Endothelial cell of umbilical vein (primary cell): ENCODE measurements at regions of chr15 and their contacts with region 1.

Region 1: DNA sequence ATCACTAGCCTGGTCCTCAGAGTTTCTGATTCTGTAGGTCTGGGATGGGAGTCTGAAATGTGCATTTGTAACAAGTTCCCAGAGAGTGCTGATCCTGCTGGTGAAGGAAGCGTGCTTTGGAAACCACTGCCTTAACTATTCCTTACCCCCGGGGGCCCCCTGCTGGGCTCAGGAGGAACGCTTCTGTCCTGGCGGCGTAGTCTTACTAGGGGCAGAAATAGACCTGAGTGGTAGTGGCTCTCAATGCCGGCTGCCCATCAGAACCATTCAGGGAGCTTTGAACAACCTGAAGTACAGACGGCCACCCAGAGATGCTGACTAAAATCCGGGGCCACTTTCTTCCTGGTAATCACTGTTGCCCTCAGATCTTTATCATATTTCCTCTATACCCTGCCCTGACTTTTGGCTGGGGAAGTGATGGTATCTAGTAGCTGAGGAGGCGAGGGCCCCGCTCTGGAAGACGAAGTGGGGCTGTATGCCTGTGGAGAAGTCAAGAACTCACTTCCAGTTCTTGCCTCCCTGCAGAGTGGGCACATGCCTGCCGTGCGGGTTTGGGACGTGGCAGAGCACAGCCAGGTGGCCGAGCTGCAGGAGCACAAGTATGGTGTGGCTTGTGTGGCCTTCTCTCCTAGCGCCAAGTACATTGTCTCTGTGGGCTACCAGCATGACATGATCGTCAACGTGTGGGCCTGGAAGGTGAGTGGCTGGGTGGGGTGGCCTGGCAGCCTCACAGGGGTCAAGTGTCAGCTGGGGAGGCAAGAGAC is 16.3 kb upstream of the JMJD7 start:
- DNase-seq: peak; percentile 84
- H3K4me3 ChIP-seq: no peak overlapping the region
- H3K27ac ChIP-seq: no peak overlapping the region
- H3K4me1 ChIP-seq: peaks cover 8% of the 10 kb centered on the region
- H3K27me3 ChIP-seq: no peaks in the 10 kb centered on the region
- CTCF ChIP-seq: peak; percentile 93 to 94
- POLR2A ChIP-seq: no peak

Region 2: GRCh38 chr15:41695750-41696426 is 115.7 kb before region 1 on chr15:
- CTCF ChIA-PET with region 1: interaction called, 5 read pairs
- POLR2A ChIA-PET with region 1: no interaction called
- dilution Hi-C with region 1: no loop called
- intact Hi-C with region 1: loop called (anchors 1 kb)
- DNase-seq: peak; percentile 77
- H3K4me3 ChIP-seq: peak overlapping the region in 1 of 3 experiments; percentile 33
- H3K27ac ChIP-seq: peak overlapping the region; percentile 52
- H3K4me1 ChIP-seq: peaks cover 16% of the 10 kb centered on the region
- H3K27me3 ChIP-seq: no peaks in the 10 kb centered on the region
- CTCF ChIP-seq: peak in 1 of 2 donors; percentile 20
- POLR2A ChIP-seq: peak; percentile 23

Region 3: GRCh38 chr15:41790756-41791546 is 20.7 kb before region 1 on chr15:
- CTCF ChIA-PET with region 1: interaction called, 22 read pairs
- POLR2A ChIA-PET with region 1: interaction called, 3 read pairs
- dilution Hi-C with region 1: no loop called
- intact Hi-C with region 1: loop called (anchors 1 kb)
- DNase-seq: peak; percentile 85
- H3K4me3 ChIP-seq: peak overlapping the region in 1 of 3 experiments; percentile 1
- H3K27ac ChIP-seq: peak overlapping the region; percentile 93
- H3K4me1 ChIP-seq: peaks cover 53% of the 10 kb centered on the region
- H3K27me3 ChIP-seq: no peaks in the 10 kb centered on the region
- CTCF ChIP-seq: no peak
- POLR2A ChIP-seq: peak; percentile 60

Region 4: GRCh38 chr15:41795996-41796856 is 15.4 kb before region 1 on chr15:
- CTCF ChIA-PET with region 1: interaction called, 22 read pairs
- POLR2A ChIA-PET with region 1: interaction called, 3 read pairs
- dilution Hi-C with region 1: no loop called
- intact Hi-C with region 1: loop called (anchors 1 kb)
- DNase-seq: peak; percentile 86
- H3K4me3 ChIP-seq: peak overlapping the region in 1 of 3 experiments; percentile 25
- H3K27ac ChIP-seq: peak overlapping the region; percentile 61
- H3K4me1 ChIP-seq: peaks cover 41% of the 10 kb centered on the region
- H3K27me3 ChIP-seq: no peaks in the 10 kb centered on the region
- CTCF ChIP-seq: no peak
- POLR2A ChIP-seq: no peak